ENCODE measurements at regions of chr16 and their contacts with region 1.

Region 1: DNA sequence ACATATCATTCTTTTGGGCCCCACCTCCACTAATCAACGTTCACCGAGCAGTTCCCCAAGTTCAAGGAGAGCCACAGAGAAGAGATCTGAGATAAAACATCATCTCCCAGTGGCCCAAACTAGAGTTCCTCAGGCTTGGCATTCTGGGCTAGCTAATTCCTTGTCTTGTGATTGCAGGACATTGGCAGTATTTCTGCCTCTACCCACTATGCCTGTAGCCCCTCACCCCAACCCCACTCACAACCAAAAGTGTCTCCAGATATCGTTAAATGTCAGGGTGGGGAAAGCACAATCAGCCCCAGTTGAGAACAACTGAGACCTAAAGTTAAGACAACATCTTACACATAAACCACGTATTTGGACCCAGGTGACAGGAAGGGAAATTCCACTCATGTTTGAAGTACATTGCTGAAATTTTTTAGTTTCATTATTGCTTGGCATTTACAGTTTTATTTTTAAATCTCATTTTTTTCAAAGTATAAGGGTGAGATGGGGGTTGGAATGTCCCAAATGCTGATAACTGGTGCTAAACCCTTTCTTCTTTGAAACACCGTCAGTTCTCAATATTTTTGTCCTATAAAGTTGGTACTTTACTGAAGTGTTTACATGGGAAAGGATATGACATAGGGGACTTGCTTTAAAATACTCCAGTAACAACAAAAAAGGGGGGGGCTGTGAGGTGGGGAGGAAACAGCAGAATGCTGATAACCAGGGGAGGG is 13.6 kb downstream of the ZC3H7A start:
- DNase-seq: peak; percentile 67
- H3K4me3 Mint-ChIP-seq: peak overlapping the region; percentile 83
- H3K27ac Mint-ChIP-seq: peak overlapping the region; percentile 98
- H3K4me1 Mint-ChIP-seq: peaks cover 64% of the 10 kb centered on the region
- H3K27me3 Mint-ChIP-seq: no peaks in the 10 kb centered on the region

Region 2: DNA sequence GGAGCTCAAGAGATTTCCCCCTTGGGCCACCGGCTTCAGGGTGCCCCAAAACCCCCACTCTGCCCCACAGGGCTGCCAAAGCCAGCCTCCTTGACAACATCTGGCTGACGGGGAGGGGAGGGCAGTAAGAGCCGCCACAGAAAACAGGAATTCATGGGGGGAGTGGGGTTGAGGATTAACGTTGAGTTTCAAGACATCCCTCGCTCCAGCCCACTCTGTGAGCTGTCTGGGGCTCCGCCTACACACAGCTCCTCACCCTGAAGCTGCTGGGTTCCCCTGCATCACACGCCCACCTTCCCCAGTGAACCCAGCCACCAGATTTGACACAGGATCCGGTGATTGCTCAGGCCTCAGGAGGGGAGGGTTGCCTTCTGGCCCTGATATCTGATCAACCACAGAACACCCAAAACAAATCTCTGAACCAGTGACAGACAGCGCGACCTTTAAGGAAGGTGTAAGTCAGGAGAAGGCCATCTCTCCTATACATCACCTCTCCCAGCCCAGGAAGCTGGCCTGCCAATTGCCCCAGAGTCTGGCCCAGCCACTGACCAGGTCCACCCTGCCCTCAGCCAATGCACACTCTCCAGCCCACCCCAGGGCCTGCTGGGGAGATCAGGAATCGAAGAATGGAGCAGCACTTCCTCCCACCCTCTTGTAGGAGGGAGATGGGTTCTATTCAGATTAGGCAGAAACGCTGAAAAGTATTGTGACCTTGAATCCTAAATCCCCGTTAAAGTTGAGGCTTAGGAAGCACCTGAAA is 707.0 kb before region 1 on chr16:
- intact Hi-C with region 1: loop called (anchors 10 kb)
- DNase-seq: peak; percentile 36
- H3K4me3 Mint-ChIP-seq: peak overlapping the region; percentile 48
- H3K27ac Mint-ChIP-seq: peak overlapping the region; percentile 90
- H3K4me1 Mint-ChIP-seq: peaks cover 94% of the 10 kb centered on the region
- H3K27me3 Mint-ChIP-seq: peaks cover 2% of the 10 kb centered on the region

Region 3: GRCh38 chr16:11639925-11640899 is 143.3 kb before region 1 on chr16:
- intact Hi-C with region 1: no loop called
- DNase-seq: no peak
- H3K4me3 Mint-ChIP-seq: no peak overlapping the region
- H3K27ac Mint-ChIP-seq: no peak overlapping the region
- H3K4me1 Mint-ChIP-seq: peaks cover 5% of the 10 kb centered on the region
- H3K27me3 Mint-ChIP-seq: peaks cover 11% of the 10 kb centered on the region

Region 4: GRCh38 chr16:11658894-11659708 is 124.4 kb before region 1 on chr16:
- intact Hi-C with region 1: no loop called
- DNase-seq: no peak
- H3K4me3 Mint-ChIP-seq: no peak overlapping the region
- H3K27ac Mint-ChIP-seq: no peak overlapping the region
- H3K4me1 Mint-ChIP-seq: peaks cover 9% of the 10 kb centered on the region
- H3K27me3 Mint-ChIP-seq: peaks cover 15% of the 10 kb centered on the region

Region 5: DNA sequence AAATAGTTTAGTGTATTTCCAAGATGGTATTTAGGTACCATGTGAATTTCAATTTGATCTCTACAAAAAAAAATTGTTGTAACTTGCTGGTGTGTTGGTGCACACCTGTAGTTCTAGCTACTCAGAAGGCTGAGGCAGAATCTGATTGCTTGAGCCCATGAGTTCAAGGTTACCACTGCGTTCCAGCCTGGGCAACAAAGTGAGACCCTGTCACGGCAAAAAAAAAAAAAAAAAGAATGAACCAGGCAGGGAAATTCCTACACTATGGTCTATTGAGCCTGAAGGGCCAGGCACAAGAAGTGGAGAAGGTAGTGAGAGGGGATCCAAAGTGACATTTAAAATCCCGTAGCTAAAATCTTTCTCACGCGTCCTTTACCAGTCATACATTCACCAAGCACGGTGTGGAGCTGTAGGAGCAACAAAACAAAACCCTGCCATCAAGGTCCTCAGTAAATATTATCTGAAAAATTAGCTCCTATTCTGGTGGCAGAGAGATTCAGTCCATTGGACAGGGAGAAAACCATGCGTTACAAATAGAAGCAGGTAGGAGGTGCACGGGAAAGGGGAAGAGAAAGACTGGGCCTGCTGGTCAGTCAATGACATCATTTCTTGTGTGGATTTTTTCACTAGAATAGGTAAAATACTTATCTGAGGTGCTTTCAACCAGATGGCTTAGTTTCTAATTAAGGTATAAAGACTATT is 68.1 kb before region 1 on chr16:
- intact Hi-C with region 1: no loop called
- DNase-seq: no peak
- H3K4me3 Mint-ChIP-seq: no peak overlapping the region
- H3K27ac Mint-ChIP-seq: peak overlapping the region; percentile 13
- H3K4me1 Mint-ChIP-seq: peaks cover 16% of the 10 kb centered on the region
- H3K27me3 Mint-ChIP-seq: no peaks in the 10 kb centered on the region

Region 6: GRCh38 chr16:11768849-11769248 is 14.6 kb before region 1 on chr16:
- intact Hi-C with region 1: loop called (anchors 2 kb)
- DNase-seq: no peak
- H3K4me3 Mint-ChIP-seq: peak overlapping the region; percentile 62
- H3K27ac Mint-ChIP-seq: peak overlapping the region; percentile 83
- H3K4me1 Mint-ChIP-seq: peaks cover 10% of the 10 kb centered on the region
- H3K27me3 Mint-ChIP-seq: no peaks in the 10 kb centered on the region

Region 7: DNA sequence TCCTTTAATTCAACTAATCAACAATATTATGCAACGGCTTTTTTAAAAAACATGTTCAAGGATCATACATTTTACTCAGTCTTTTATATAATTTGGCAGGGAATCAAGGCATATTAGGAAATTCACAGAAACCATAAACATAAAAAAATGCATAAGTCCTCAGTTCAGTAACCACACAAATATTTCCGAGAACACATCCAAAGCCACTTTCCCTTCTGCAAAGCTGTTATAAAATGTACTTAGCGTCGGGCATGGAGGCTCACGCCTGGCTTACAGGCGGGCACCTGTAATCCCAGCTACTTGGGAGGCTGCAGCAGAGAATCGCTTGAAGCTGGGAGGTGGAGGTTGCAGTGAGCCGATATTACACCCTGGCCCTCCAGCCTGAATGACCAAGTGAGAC is 23.2 kb after region 1 on chr16:
- intact Hi-C with region 1: loop called (anchors 1 kb)
- DNase-seq: no peak
- H3K4me3 Mint-ChIP-seq: no peak overlapping the region
- H3K27ac Mint-ChIP-seq: no peak overlapping the region
- H3K4me1 Mint-ChIP-seq: peaks cover 12% of the 10 kb centered on the region
- H3K27me3 Mint-ChIP-seq: no peaks in the 10 kb centered on the region

Region 8: DNA sequence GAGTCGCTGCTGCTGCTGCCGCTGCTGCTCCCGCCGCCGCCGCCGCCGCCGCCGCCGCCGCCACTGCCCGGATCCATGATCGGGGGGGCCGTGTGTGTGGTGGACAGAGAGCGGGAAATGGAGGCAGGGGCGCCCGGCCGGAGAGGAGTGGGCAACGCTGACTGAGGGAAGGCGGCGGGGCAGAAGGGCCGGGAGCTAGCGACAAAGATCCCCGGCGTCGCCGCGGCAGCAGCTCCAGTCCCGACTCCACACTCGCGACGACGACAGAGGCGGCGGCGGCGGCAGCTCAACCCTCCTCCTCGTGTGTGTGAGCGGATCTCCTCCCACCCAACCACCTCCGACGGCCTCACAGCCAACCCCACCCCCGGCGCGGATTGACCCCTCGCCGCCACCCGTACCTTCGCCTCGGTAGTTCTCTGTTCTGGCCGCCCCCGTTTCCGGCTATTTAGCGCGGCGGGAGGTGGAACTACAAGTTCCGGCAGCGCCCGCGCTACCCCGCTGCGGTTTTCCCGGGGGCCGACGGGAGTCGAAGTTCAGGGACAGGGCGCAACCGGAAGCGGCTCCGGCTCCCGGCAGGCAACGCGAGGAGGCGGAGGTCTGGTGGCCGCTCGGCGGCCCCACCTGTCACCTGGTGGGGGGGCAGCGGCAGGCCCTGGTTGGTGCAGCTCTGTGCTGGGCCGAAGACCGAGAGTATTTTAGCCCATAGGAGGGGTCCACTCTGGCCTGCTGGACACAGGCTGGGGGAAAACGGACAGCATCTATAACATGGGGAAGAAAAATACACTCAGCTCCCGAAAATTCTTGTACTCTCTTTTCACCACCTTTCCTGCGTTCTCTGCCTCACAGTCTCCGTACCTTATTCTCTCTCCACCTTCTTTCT is 132.4 kb after region 1 on chr16 and contains the start of gene GSPT1:
- intact Hi-C with region 1: loop called (anchors 5 kb)
- DNase-seq: peak; percentile 99
- H3K4me3 Mint-ChIP-seq: peak within 1 kb of the TSS; percentile 91
- H3K27ac Mint-ChIP-seq: peak within 1 kb of the TSS; percentile 94
- H3K4me1 Mint-ChIP-seq: peaks cover 32% of the 10 kb centered on the region
- H3K27me3 Mint-ChIP-seq: peaks cover 8% of the 10 kb centered on the region
- total RNA-seq, gene GSPT1: 207 and 214 TPM in 2 replicates

Region 9: GRCh38 chr16:12147681-12148080 is 364.2 kb after region 1 on chr16:
- intact Hi-C with region 1: no loop called
- DNase-seq: no peak
- H3K4me3 Mint-ChIP-seq: no peak overlapping the region
- H3K27ac Mint-ChIP-seq: no peak overlapping the region
- H3K4me1 Mint-ChIP-seq: peaks cover 8% of the 10 kb centered on the region
- H3K27me3 Mint-ChIP-seq: no peaks in the 10 kb centered on the region

Measured in activated T-helper 1 cell treated with anti-CD3 and anti-CD28 coated beads, Interleukin-12 subunit alpha, Interleukin-12 subunit beta, Interleukin-2, Interleukin-4 antibody, amounts not matched to agents 30 ng/mL and 10 ng/mL and 1 ng/mL, durations not matched to agents 14 hours and 24 hours and 36 hours (primary cell).